Activated CD4-positive, alpha-beta memory T cell treated with anti-CD3 and anti-CD28 coated beads for 36 hours (primary cell): ENCODE measurements at regions of chr6 and their contacts with region 1.

Region 1: GRCh38 chr6:33276864-33277662 is at the start of gene B3GALT4:
- DNase-seq: peak; percentile 85
- H3K4me3 Mint-ChIP-seq: peak within 1 kb of the TSS; percentile 94
- H3K27ac Mint-ChIP-seq: peak within 1 kb of the TSS; percentile 92
- H3K4me1 Mint-ChIP-seq: peaks cover 37% of the 10 kb centered on the region
- H3K27me3 Mint-ChIP-seq: no peaks in the 10 kb centered on the region
- total RNA-seq, gene B3GALT4: 5.9 to 6.7 TPM

Region 2: GRCh38 chr6:33288921-33289748 is 12.1 kb after region 1 on chr6 and contains the starts of genes PFDN6 and WDR46:
- CTCF ChIA-PET with region 1: interaction called, 37 read pairs
- POLR2A ChIA-PET with region 1: interaction called, 40 read pairs
- intact Hi-C with region 1: loop called (anchors 1 kb)
- DNase-seq: peak; percentile 89
- H3K4me3 Mint-ChIP-seq: peak within 1 kb of the TSS; percentile 98
- H3K27ac Mint-ChIP-seq: peak within 1 kb of the TSS; percentile 80
- H3K4me1 Mint-ChIP-seq: peaks cover 41% of the 10 kb centered on the region
- H3K27me3 Mint-ChIP-seq: no peaks in the 10 kb centered on the region
- total RNA-seq, gene PFDN6: 78.5 to 90.9 TPM
- total RNA-seq, gene WDR46: 59.4 to 60.7 TPM

Region 3: DNA sequence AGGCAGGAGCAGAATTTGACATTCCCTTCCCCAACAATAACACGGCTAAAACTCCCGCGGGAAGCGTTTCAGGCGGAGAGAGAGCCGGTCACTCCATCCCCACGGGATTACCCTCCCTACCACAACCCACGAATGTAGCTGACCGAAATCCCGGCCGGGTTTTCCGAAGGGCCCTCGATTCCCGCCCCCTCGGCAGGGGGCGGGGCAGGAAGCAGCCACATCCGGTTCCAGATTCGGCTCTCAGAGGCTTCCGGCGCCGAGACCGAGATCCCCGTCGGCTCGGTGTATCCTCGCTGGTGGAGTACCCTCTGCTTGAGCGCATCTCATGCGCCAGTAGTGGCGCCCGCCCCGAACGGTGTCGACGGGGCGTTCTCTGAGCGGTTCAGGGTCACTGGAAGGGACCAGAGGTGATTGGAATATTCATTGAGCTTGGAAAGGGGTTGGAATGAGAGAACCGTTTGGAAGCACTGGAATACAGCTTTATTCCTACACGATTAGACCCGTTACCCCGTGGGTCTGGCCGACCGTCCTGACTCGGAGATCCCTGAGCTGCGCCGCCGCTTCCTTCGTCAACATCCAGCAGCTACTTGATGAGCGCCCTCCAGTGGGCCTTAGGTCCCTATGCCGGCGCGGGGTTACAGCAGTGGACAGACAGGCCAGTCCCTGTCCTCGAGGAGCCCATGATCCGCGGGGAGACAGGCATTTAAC is 22.3 kb after region 1 on chr6:
- CTCF ChIA-PET with region 1: interaction called, 31 read pairs
- POLR2A ChIA-PET with region 1: interaction called, 26 read pairs
- intact Hi-C with region 1: no loop called
- DNase-seq: peak; percentile 96
- H3K4me3 Mint-ChIP-seq: peak overlapping the region; percentile 89
- H3K27ac Mint-ChIP-seq: peak overlapping the region; percentile 96
- H3K4me1 Mint-ChIP-seq: peaks cover 30% of the 10 kb centered on the region
- H3K27me3 Mint-ChIP-seq: no peaks in the 10 kb centered on the region

Region 4: DNA sequence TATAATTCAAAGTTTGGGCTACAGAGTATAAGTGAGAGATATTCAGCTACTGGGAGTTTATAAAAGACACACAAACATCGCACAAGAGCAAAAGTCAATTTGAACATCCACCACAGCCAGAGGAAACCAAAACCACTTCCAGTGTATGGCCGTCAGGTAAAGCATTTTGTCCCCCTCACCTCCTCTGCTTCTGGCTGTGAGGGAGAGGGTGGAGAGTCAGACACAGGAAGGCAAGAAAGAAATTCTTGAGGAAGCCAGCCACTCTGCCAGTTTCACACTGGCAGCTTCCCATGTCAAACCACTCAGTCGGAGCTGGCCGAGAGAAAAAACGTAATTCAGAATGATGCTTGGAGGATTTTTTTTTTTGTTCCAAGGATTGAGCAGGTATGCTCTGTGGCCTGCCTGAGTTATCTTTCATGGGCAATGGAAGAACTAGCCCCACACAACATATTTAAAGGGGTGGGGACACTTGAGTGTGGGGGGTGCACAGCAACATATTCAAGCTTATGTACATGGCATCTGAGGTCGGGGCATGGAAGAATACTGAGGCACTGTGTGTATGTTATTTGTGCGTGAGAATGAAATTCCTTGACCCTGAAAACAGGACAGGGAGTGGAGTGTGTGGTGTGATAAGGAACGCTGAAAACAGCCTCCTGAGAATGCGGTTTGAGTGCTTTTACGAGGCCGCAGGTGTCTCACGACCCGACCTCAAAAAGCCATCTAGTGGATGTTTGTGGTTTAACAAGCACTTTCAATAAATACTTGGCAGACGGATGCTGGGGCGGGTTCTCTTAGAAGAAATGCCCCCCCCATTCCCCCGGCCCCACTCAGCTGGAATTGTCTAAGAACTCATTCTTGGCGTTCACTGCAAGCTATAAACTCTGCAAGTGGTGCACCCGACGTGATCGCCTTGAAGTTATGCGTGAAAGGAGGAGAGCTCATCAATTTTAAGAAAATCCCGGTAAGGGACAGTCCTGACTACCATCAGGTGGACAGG is 67.9 kb after region 1 on chr6:
- CTCF ChIA-PET with region 1: interaction called, 17 read pairs
- POLR2A ChIA-PET with region 1: interaction called, 4 read pairs
- intact Hi-C with region 1: loop called (anchors 1 kb)
- DNase-seq: peak; percentile 75
- H3K4me3 Mint-ChIP-seq: peak overlapping the region; percentile 73
- H3K27ac Mint-ChIP-seq: peak overlapping the region; percentile 85
- H3K4me1 Mint-ChIP-seq: peaks cover 24% of the 10 kb centered on the region
- H3K27me3 Mint-ChIP-seq: no peaks in the 10 kb centered on the region